GM12878 (cell line): ENCODE measurements at regions of chr9 and their contacts with region 1.

Region 1: DNA sequence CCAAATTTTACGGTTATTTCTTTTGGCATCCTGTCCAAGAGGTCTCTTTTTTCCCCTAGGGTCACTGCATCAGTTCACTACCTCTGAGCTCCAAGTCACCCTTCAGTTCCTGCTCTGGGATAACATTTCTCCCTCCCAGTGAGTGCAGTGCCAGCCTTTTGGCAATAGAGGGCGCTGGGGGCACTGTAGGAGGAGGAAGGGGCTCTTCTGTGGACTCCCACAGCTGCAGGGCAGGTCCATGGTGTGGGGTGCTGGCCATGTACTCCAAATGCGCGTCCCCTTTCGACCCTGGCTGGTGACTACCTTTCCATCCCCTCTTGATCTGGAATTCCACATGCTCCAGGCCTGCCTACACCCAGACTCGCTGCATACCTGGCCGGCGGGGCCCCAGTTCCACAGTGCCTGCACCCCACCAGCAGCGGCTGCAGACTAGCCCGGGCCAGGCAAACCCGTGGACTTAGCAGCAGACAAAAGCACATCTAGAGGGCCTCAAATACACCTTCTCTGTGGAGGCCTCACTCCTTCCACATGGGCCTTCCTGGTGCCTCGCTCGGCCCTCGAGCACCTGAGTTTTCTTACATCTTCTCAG is 20.4 kb upstream of the NINJ1 start:
- DNase-seq: no peak
- ATAC-seq: peak; percentile 28; the same call in 1 of the 3 replicates
- H3K4me3 ChIP-seq: no peak overlapping the region
- H3K27ac ChIP-seq: no peak overlapping the region
- H3K4me1 ChIP-seq: peaks cover 5% of the 10 kb centered on the region
- H3K27me3 ChIP-seq: no peaks in the 10 kb centered on the region
- CTCF ChIP-seq: peak; percentile 47 to 71 (median 64)
- EP300 ChIP-seq: no peak
- POLR2A ChIP-seq: no peak
- RAD21 ChIP-seq: peak; percentile 29; the same call in 1 of the 2 replicates

Region 2: DNA sequence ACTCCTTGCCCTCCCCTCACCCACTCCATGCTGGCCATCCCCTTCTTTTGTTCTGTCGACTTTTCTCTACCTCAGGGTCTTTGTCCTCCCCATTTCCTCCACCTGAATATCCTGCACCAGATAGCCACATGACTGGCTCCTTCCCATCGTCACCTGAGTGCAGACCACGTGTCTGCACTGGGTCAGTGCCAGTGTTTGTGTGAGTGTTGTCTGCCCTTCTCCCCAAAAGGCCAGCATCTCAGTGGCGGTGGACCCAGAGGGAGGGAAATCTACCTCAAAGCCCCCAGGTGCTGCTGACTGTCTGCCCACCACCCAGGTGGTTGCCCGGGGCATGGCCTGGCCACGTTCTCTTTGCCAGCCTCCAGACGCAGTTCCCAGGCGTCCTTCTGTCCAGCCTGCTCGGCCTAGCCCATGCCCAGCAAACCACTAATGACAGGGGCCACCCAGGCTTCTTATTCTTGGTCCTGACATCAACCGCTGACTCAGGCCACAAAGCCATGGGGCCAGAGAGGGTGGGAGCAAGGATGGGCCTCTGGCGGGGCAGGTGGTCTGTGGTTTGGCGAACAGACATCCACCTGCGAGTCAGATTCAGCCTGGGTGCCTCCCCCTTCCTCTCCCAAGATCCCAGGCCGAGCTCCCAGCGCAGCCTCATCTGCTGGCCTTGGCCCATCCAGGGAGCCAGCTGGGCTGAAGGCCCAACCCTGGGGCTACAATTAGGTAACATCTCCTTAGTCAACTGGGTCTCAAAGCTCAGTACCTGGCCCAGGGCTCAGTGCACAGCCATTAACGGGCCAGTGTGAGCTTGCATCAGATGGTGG is 14.8 kb before region 1 on chr9:
- CTCF ChIA-PET with region 1: interaction called, 10 read pairs
- POLR2A ChIA-PET with region 1: no interaction called
- RAD21 ChIA-PET with region 1: no interaction called
- SMC1A ChIA-PET with region 1: interaction called, 3 read pairs
- in situ Hi-C with region 1: no loop called
- intact Hi-C with region 1: no loop called
- DNase-seq: no peak
- ATAC-seq: no peak
- H3K4me3 ChIP-seq: no peak overlapping the region
- H3K27ac ChIP-seq: no peak overlapping the region
- H3K4me1 ChIP-seq: peaks cover 20% of the 10 kb centered on the region
- H3K27me3 ChIP-seq: no peaks in the 10 kb centered on the region; a peak in 1 of 4 replicates
- CTCF ChIP-seq: no peak
- EP300 ChIP-seq: no peak
- POLR2A ChIP-seq: no peak
- RAD21 ChIP-seq: no peak

Region 3: DNA sequence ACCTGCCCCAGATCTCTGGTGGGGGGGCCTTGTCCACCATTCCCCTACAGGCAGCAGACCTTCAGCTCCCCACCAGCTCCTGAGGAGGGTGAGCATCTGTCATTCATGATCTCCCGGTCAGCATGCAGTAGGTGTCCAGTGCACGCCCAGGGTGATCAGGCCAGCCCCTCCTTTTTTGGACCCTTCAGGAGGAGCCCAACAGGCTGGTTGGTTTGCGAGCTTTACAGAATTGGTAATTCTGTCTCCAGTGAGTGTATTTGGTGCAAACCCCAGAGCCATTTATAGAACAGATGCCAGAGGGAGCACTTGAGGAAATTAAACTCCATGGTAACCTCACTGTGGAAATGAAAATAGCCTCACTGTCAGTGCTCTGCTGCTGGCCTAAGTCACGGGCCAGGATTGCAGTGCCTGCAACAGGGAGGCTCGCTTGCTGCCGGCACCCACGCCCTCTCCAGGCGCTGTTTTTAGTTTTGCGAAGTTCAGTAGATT is 53.0 kb after region 1 on chr9:
- CTCF ChIA-PET with region 1: no interaction called
- POLR2A ChIA-PET with region 1: no interaction called
- RAD21 ChIA-PET with region 1: no interaction called
- SMC1A ChIA-PET with region 1: no interaction called
- in situ Hi-C with region 1: no loop called
- intact Hi-C with region 1: no loop called
- DNase-seq: no peak
- ATAC-seq: no peak
- H3K4me3 ChIP-seq: no peak overlapping the region
- H3K27ac ChIP-seq: no peak overlapping the region
- H3K4me1 ChIP-seq: no peaks in the 10 kb centered on the region
- H3K27me3 ChIP-seq: no peaks in the 10 kb centered on the region; a peak in 1 of 4 replicates
- CTCF ChIP-seq: no peak
- EP300 ChIP-seq: no peak
- POLR2A ChIP-seq: no peak
- RAD21 ChIP-seq: no peak